MCF 10A (cell line): ENCODE measurements at regions of chr5 and their contacts with region 1.

Region 1: GRCh38 chr5:14190194-14191164 is 47.3 kb downstream of the TRIO start:
- DNase-seq: peak; percentile 87
- H3K4me3 Mint-ChIP-seq: peak overlapping the region; percentile 73
- H3K27ac Mint-ChIP-seq: peak overlapping the region; percentile 98
- H3K4me1 Mint-ChIP-seq: peaks cover 56% of the 10 kb centered on the region
- H3K27me3 Mint-ChIP-seq: no peaks in the 10 kb centered on the region
- CTCF ChIP-seq: no peak

Region 2: GRCh38 chr5:14101922-14102321 is 88.6 kb before region 1 on chr5:
- CTCF ChIA-PET with region 1: no interaction called
- POLR2A ChIA-PET with region 1: no interaction called
- intact Hi-C with region 1: no loop called
- DNase-seq: no peak
- H3K4me3 Mint-ChIP-seq: no peak overlapping the region
- H3K27ac Mint-ChIP-seq: no peak overlapping the region
- H3K4me1 Mint-ChIP-seq: peaks cover 7% of the 10 kb centered on the region
- H3K27me3 Mint-ChIP-seq: no peaks in the 10 kb centered on the region
- CTCF ChIP-seq: no peak

Region 3: DNA sequence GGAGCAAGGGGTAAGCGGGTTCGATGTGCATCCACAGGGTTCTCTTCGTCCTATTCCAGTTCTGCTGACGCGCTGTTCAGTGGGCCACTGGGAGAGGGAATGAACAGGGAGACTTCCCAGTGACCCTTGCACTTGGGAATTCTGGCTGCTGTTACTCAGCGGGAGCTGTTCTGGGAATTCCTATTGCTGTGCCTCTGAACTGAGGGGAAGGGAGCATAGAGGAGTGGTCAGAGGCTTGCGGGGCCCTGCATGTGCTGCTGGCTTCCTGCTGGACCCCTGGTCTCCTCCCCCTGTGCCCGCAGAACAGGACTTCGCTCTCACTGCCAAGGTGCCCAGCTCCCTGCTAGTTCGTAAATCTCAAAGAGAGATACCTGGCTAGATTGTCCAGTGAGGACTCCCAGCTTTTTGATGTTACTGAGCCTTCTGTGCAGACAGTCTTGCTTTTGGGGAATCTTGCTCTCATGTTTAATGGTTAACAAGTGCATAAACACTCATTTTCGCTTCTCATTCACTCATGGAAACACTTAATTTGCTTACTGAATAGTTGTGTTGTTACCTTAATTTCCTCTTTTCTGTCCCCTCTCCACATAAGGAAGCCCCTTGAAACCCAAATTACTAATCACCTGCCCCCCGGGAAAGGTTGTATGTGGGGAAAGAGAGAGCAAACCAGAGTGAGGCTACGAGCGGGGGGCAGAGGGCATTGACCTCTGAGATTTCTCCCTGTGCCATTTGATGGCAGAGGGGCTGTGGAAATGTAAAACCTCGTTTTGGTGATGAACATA is 41.4 kb before region 1 on chr5:
- CTCF ChIA-PET with region 1: interaction called, 8 read pairs
- POLR2A ChIA-PET with region 1: interaction called, 49 read pairs
- intact Hi-C with region 1: loop called (anchors 2 kb)
- DNase-seq: no peak
- H3K4me3 Mint-ChIP-seq: no peak overlapping the region
- H3K27ac Mint-ChIP-seq: peak overlapping the region; percentile 46
- H3K4me1 Mint-ChIP-seq: peaks cover 49% of the 10 kb centered on the region
- H3K27me3 Mint-ChIP-seq: no peaks in the 10 kb centered on the region
- CTCF ChIP-seq: no peak

Region 4: GRCh38 chr5:14156650-14157493 is 33.6 kb before region 1 on chr5:
- CTCF ChIA-PET with region 1: interaction called, 5 read pairs
- POLR2A ChIA-PET with region 1: interaction called, 49 read pairs
- intact Hi-C with region 1: loop called (anchors 1 kb)
- DNase-seq: peak; percentile 93
- H3K4me3 Mint-ChIP-seq: no peak overlapping the region
- H3K27ac Mint-ChIP-seq: no peak overlapping the region
- H3K4me1 Mint-ChIP-seq: peaks cover 29% of the 10 kb centered on the region
- H3K27me3 Mint-ChIP-seq: no peaks in the 10 kb centered on the region
- CTCF ChIP-seq: no peak

Region 5: DNA sequence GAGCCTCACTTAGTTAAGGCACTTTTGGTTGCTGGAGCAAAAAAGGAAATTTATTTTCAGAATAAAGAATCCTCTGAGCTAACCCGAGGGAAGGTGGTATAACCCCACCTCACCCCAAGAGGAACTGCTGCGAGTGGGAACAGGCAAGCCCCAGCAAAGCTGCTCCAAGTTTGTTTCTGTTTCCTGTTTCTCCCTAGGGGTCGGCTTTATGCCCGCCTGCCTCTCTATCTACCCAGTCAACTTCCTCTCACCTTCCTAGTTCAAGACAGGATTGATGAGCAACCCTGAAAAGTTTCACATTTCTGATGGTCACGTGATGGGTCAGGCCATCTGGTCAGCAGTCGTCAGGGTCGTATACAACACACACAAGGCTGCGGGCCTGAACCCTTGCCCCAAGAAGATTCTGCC is 16.2 kb before region 1 on chr5:
- CTCF ChIA-PET with region 1: interaction called, 6 read pairs
- POLR2A ChIA-PET with region 1: interaction called, 12 read pairs
- intact Hi-C with region 1: no loop called
- DNase-seq: no peak
- H3K4me3 Mint-ChIP-seq: no peak overlapping the region
- H3K27ac Mint-ChIP-seq: peak overlapping the region; percentile 90
- H3K4me1 Mint-ChIP-seq: peaks cover 45% of the 10 kb centered on the region
- H3K27me3 Mint-ChIP-seq: no peaks in the 10 kb centered on the region
- CTCF ChIP-seq: no peak

Region 6: DNA sequence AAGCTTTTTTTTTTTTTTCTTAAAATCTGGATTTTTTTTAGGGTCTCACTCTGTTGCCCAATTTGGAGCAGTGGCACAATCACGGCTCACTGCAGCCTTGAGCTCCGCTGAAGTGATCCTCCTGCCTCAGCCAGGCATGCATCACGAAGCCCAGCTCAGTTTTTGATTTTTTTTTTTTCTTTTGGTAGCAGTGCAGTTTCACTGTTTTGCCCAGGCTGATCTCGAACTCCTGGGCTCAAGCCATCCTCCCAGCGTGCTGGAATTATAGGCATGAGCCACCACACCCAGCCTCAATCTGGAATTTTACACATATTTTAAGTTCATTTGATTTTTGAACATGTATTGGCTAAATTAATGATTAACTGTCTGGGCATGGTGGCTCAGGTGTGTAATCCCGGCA is 11.0 kb before region 1 on chr5:
- CTCF ChIA-PET with region 1: interaction called, 6 read pairs
- POLR2A ChIA-PET with region 1: interaction called, 12 read pairs
- intact Hi-C with region 1: no loop called
- DNase-seq: no peak
- H3K4me3 Mint-ChIP-seq: no peak overlapping the region
- H3K27ac Mint-ChIP-seq: no peak overlapping the region
- H3K4me1 Mint-ChIP-seq: peaks cover 37% of the 10 kb centered on the region
- H3K27me3 Mint-ChIP-seq: no peaks in the 10 kb centered on the region
- CTCF ChIP-seq: no peak

Region 7: DNA sequence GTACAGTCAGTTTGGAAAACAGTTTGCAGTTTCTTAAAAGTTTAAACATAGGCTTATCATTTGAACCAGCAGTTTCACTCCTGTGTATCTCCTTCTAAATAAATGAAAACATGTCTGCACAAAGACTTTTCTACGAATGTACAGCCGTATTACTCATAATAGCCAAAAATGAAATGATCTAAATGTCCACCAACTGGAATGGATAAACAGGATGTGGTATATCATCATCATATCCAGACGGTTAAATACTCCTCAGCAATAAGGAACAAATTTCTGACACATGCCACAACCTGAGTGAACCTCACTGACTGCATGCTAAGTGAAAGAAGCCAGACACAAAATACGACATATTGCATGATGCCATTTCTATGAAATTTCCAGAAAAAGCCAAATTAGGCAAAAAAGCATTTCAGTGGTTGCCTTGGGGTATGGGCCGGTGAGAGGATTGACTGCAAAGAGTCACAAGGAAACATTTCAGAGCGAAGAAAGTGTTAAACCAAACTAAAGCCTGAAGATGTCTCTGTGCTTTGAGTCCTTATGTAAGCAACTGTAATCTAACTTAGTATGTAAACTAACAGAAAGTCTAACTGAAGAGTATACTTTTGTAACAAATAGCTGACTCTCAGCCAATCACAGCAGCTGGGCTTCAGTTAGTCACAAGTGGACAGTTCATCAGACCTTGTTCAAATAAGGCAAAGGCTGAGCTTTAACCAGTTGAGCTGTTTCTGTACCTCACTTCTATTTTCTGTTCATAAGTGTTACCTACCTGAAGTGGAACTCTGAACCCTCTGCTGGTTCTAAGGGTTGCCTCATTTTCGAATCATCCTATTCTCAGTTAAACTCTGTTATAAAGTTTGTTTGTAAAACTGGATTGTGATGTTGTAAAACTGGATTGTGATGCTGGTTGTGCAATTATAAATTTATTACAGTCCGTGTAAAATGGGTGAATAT is 17.9 kb after region 1 on chr5:
- CTCF ChIA-PET with region 1: interaction called, 3 read pairs
- POLR2A ChIA-PET with region 1: interaction called, 58 read pairs
- intact Hi-C with region 1: no loop called
- DNase-seq: peak; percentile 58
- H3K4me3 Mint-ChIP-seq: peak overlapping the region; percentile 55
- H3K27ac Mint-ChIP-seq: peak overlapping the region; percentile 89
- H3K4me1 Mint-ChIP-seq: peaks cover 56% of the 10 kb centered on the region
- H3K27me3 Mint-ChIP-seq: no peaks in the 10 kb centered on the region
- CTCF ChIP-seq: no peak

Region 8: GRCh38 chr5:14264604-14265316 is 74.3 kb after region 1 on chr5:
- CTCF ChIA-PET with region 1: interaction called, 12 read pairs
- POLR2A ChIA-PET with region 1: interaction called, 26 read pairs
- intact Hi-C with region 1: loop called (anchors 1 kb)
- DNase-seq: peak; percentile 93
- H3K4me3 Mint-ChIP-seq: peak overlapping the region; percentile 74
- H3K27ac Mint-ChIP-seq: peak overlapping the region; percentile 52
- H3K4me1 Mint-ChIP-seq: peaks cover 53% of the 10 kb centered on the region
- H3K27me3 Mint-ChIP-seq: no peaks in the 10 kb centered on the region
- CTCF ChIP-seq: no peak